ENCODE measurements at regions of chr1 and their contacts with region 1.

Region 1: GRCh38 chr1:214397497-214397896 is 116.5 kb downstream of the SMYD2 start:
- DNase-seq: no peak
- H3K4me3 Mint-ChIP-seq: no peak overlapping the region
- H3K27ac Mint-ChIP-seq: peak overlapping the region; percentile 55
- H3K4me1 Mint-ChIP-seq: peaks cover 15% of the 10 kb centered on the region
- H3K27me3 Mint-ChIP-seq: no peaks in the 10 kb centered on the region
- CTCF ChIP-seq: no peak

Region 2: GRCh38 chr1:214446772-214447556 is 49.5 kb after region 1 on chr1:
- CTCF ChIA-PET with region 1: interaction called, 5 read pairs
- POLR2A ChIA-PET with region 1: interaction called, 4 read pairs
- intact Hi-C with region 1: loop called (anchors 2 kb)
- DNase-seq: peak; percentile 97
- H3K4me3 Mint-ChIP-seq: peak overlapping the region; percentile 26
- H3K27ac Mint-ChIP-seq: peak overlapping the region; percentile 81
- H3K4me1 Mint-ChIP-seq: peaks cover 59% of the 10 kb centered on the region
- H3K27me3 Mint-ChIP-seq: no peaks in the 10 kb centered on the region
- CTCF ChIP-seq: no peak